WTC11 (cell line): ENCODE measurements at regions of chr14 and their contacts with region 1.

Region 1: GRCh38 chr14:35215110-35215876 is 76.9 kb upstream of the PSMA6 start:
- DNase-seq: no peak
- ATAC-seq: peak; percentile 66
- H3K4me3 Mint-ChIP-seq: no peak overlapping the region
- H3K27ac Mint-ChIP-seq: peak overlapping the region; percentile 71
- H3K4me1 Mint-ChIP-seq: peaks cover 9% of the 10 kb centered on the region
- H3K27me3 Mint-ChIP-seq: no peaks in the 10 kb centered on the region
- CTCF ChIP-seq: no peak

Region 2: DNA sequence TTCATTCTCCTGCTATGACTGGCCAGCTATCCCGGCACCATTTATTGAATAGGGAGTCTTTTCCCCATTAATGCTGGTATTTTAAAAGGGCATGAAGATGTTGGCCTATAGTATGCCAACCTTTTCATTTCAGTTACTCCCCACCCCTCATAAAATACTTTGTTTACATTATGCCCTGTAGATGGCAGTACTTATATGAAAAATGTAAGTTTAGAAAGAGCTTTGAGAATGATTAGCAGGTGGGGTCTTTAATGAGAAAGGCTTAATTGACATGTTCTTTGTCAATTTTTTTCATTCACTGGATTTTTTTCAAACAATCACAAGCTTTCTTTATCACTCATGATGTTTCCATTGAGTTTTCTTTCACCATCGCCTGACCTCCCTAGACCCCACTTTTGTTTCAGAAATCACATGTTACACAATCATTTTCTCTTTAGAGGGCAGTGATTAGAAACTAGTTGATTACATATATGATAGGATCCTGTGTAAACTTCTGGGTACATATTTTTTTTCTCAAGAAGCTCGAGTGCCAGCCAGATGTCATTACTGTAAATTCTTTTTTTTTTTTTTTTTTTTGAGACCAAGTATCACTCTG is 14.3 kb after region 1 on chr14:
- CTCF ChIA-PET with region 1: interaction called, 10 read pairs
- POLR2A ChIA-PET with region 1: no interaction called
- DNase-seq: no peak
- ATAC-seq: no peak
- H3K4me3 Mint-ChIP-seq: no peak overlapping the region
- H3K27ac Mint-ChIP-seq: no peak overlapping the region
- H3K4me1 Mint-ChIP-seq: no peaks in the 10 kb centered on the region
- H3K27me3 Mint-ChIP-seq: no peaks in the 10 kb centered on the region
- CTCF ChIP-seq: no peak

Region 3: DNA sequence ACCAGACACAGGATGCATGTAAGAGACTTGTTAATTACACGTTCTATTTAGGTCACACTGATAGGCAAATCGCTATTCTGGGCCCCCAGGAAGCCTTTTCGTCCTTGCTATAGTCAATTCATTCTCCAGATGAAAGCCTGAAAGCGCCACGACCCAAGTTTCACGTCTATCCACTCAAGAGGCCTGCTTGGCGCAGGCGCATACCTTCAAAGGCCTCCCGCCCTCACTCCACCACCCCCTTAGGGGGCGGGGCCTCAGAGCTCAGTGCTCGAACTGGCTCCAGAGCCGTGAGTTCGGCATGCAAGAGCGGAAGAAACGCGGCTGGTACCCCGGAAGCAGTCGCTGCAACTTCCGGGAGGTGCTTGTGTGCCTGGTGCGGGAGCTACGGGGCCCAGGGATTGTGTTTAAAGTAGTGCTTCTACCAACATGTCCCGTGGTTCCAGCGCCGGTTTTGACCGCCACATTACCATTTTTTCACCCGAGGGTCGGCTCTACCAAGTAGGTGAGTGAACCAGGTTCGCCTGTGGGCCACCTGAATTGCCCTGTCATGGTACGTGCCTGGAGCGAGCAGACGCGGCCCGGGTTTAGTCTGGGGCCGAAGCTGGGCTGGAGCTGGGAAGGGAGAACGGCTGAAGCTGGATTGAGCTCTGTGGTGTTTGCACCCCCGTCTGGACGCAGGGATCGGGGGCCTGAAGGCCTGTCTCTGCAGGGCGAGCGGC is 76.9 kb after region 1 on chr14 and contains the start of gene PSMA6:
- CTCF ChIA-PET with region 1: interaction called, 15 read pairs
- POLR2A ChIA-PET with region 1: interaction called, 3 read pairs
- DNase-seq: peak; percentile 99
- ATAC-seq: peak; percentile 97
- H3K4me3 Mint-ChIP-seq: peak within 1 kb of the TSS; percentile 100
- H3K27ac Mint-ChIP-seq: peak within 1 kb of the TSS; percentile 98
- H3K4me1 Mint-ChIP-seq: peaks cover 23% of the 10 kb centered on the region
- H3K27me3 Mint-ChIP-seq: no peaks in the 10 kb centered on the region
- CTCF ChIP-seq: no peak
- total RNA-seq, gene PSMA6: 197 to 215 TPM (median 210 TPM) in 3 replicates

Region 4: DNA sequence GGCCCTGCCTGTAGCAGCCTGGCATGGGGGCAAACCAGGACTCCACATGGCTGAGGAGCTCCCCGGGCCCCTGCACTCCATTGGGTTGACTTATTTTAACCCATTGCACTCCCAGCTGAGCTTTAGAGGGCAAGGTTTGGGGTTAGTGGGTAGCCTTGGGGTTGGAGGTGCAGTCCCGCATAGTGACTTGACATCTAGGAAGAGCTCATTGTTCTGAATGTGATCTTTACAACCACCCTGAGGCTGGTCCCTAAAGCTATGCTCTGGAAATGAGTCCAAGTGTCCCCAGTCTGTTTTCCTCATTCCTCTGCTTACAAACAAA is 152.8 kb after region 1 on chr14:
- CTCF ChIA-PET with region 1: interaction called, 11 read pairs
- POLR2A ChIA-PET with region 1: no interaction called
- DNase-seq: no peak
- ATAC-seq: peak; percentile 10; the same call in 1 of the 2 replicates
- H3K4me3 Mint-ChIP-seq: no peak overlapping the region
- H3K27ac Mint-ChIP-seq: no peak overlapping the region
- H3K4me1 Mint-ChIP-seq: peaks cover 22% of the 10 kb centered on the region
- H3K27me3 Mint-ChIP-seq: peaks cover 4% of the 10 kb centered on the region; the same call in 1 of the 2 replicates
- CTCF ChIP-seq: no peak